SK-N-SH (cell line): ENCODE measurements at regions of chr7 and their contacts with region 1.

Region 1: GRCh38 chr7:143240291-143241168 is 18.7 kb downstream of the TAS2R40 start:
- DNase-seq: peak; percentile 68
- H3K4me3 ChIP-seq: peak overlapping the region; percentile 13 to 18; a peak in 2 of 4 replicates
- H3K27ac ChIP-seq: peak overlapping the region in 1 of 2 experiments; percentile 42; a peak in 2 of 4 replicates
- H3K4me1 ChIP-seq: peaks cover 0 to 7% of the 10 kb centered on the region in 2 experiments; a peak in 2 of 4 replicates
- H3K27me3 ChIP-seq: no peaks in the 10 kb centered on the region
- CTCF ChIP-seq: peak; percentile 100
- EP300 ChIP-seq: no peak
- RAD21 ChIP-seq: peak; percentile 95

Region 2: DNA sequence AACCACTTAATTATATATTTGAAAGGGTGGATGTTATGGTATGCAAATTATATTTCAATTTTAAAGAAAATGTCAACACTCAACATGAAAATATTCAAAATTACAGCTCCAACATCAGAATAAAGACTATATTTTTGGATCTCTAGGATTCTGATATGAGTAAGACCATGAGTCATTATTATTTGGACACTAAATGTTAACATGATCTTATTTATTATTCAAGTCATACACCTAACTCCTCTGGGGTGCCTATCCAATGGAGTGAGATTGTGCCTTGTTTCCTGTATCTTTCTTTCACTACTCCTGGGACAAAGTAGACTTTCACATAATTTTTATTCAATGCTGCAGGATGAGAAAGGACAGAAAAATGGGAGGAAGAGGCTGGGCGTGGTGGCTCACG is 626.4 kb before region 1 on chr7:
- CTCF ChIA-PET with region 1: no interaction called
- POLR2A ChIA-PET with region 1: no interaction called
- DNase-seq: no peak
- H3K4me3 ChIP-seq: no peak overlapping the region
- H3K27ac ChIP-seq: no peak overlapping the region
- H3K4me1 ChIP-seq: peaks cover 0 to 17% of the 10 kb centered on the region in 2 experiments; a peak in 2 of 4 replicates
- H3K27me3 ChIP-seq: no peaks in the 10 kb centered on the region; the same call in 1 of the 2 replicates
- CTCF ChIP-seq: no peak
- EP300 ChIP-seq: no peak
- RAD21 ChIP-seq: no peak

Region 3: DNA sequence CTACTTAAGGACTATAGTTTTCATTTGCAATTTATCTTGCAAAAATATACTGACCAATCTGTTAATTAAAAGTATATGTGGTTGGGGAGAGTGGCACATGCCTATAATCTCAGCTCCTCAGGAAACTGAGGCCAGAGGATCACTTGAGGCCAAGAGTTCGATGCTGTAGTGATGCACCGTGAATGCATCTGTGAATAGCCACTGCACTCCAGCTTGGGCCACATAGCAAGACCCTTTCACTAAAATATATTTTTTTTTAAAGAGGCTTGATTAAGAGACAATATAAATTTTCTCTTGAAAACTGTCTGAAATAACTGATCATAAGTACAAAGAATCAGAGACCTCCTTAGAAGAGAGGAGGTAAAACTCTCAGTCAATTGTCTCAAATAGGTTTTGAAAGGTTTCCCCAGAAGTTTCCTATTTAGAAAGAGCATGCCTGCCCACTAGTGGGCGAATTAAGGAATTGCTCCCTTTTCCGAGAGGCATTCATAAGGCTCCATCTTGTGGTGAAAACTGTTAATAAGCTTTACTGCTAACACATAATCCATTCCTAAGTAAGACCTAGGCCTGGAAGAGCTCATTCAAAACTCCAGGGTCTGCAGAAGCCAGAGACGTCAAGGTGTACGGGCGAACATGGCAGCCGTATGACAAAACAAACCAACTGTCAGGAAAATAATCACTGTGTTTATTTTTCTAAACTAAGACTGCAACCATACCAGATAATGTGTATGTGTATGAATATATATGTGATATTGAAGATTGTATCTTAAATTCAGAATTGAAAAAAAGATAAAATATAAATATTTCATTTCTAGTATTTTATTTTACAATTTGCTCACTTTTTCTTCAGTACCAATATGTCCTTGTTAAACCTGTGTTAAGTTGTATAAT is 25.5 kb before region 1 on chr7:
- CTCF ChIA-PET with region 1: interaction called, 32 read pairs
- POLR2A ChIA-PET with region 1: no interaction called
- DNase-seq: peak; percentile 77
- H3K4me3 ChIP-seq: no peak overlapping the region; a peak in 1 of 4 replicates
- H3K27ac ChIP-seq: no peak overlapping the region
- H3K4me1 ChIP-seq: no peaks in the 10 kb centered on the region
- H3K27me3 ChIP-seq: peaks cover 7% of the 10 kb centered on the region; the same call in 1 of the 2 replicates
- CTCF ChIP-seq: peak; percentile 100
- EP300 ChIP-seq: no peak
- RAD21 ChIP-seq: peak; percentile 100

Region 4: GRCh38 chr7:143256325-143256724 is 15.8 kb after region 1 on chr7:
- CTCF ChIA-PET with region 1: interaction called, 33 read pairs
- POLR2A ChIA-PET with region 1: no interaction called
- DNase-seq: no peak
- H3K4me3 ChIP-seq: no peak overlapping the region
- H3K27ac ChIP-seq: no peak overlapping the region
- H3K4me1 ChIP-seq: no peaks in the 10 kb centered on the region
- H3K27me3 ChIP-seq: no peaks in the 10 kb centered on the region
- CTCF ChIP-seq: peak; percentile 21; the same call in 1 of the 2 replicates
- EP300 ChIP-seq: no peak
- RAD21 ChIP-seq: no peak

Region 5: GRCh38 chr7:143287935-143288826 is 47.7 kb after region 1 on chr7 and contains the start of gene CASP2:
- CTCF ChIA-PET with region 1: interaction called, 13 read pairs
- POLR2A ChIA-PET with region 1: no interaction called
- DNase-seq: peak; percentile 100
- H3K4me3 ChIP-seq: peak within 1 kb of the TSS; percentile 73 to 86
- H3K27ac ChIP-seq: peak within 1 kb of the TSS; percentile 69 to 89
- H3K4me1 ChIP-seq: peaks cover 15 to 26% of the 10 kb centered on the region in 2 experiments; a peak in 3 of 4 replicates
- H3K27me3 ChIP-seq: no peaks in the 10 kb centered on the region
- CTCF ChIP-seq: peak; percentile 47
- EP300 ChIP-seq: no peak
- RAD21 ChIP-seq: no peak
- polyA plus RNA-seq, gene CASP2: 19.7 and 22.3 TPM in 2 replicates

Region 6: DNA sequence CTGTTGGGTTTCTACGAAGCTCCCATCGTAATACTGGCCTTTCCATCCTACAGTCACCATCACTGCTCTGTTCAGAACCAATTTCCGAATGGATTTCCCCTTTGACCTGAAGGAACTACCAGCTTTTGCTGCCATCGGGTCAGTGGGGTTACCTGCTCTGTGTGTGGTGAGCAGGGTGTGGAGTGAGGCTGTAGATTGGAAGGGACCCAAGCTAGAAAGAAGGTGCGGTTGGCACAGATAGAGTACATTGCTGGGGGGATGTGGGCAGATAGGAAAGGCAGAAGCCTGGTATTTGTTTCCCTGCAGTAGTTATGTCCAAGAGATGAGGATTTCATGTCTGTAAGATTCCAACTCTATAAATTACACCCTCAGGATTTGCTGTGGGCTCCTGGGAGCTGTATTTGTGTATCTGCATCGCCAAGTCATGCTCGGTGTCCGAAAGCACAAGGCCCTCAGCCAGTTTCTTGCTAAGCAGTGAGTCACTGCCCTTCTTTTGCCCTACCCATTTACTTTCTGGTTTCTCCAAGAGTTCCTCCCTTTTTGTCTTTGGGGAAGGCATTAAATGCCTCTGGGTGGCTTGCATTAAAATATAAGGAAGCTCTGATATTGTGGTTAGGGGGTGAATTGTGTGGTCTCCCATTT is 90.8 kb after region 1 on chr7:
- CTCF ChIA-PET with region 1: interaction called, 13 read pairs
- POLR2A ChIA-PET with region 1: interaction called, 5 read pairs
- DNase-seq: no peak
- H3K4me3 ChIP-seq: no peak overlapping the region
- H3K27ac ChIP-seq: peak overlapping the region in 1 of 2 experiments; percentile 34; a peak in 1 of 4 replicates
- H3K4me1 ChIP-seq: peaks cover 0 to 3% of the 10 kb centered on the region in 2 experiments; a peak in 1 of 4 replicates
- H3K27me3 ChIP-seq: no peaks in the 10 kb centered on the region
- CTCF ChIP-seq: no peak
- EP300 ChIP-seq: no peak
- RAD21 ChIP-seq: no peak

Region 7: GRCh38 chr7:143372070-143372469 is 131.5 kb after region 1 on chr7:
- CTCF ChIA-PET with region 1: interaction called, 20 read pairs
- POLR2A ChIA-PET with region 1: no interaction called
- DNase-seq: no peak
- H3K4me3 ChIP-seq: no peak overlapping the region
- H3K27ac ChIP-seq: no peak overlapping the region
- H3K4me1 ChIP-seq: peaks cover 6 to 29% of the 10 kb centered on the region in 2 experiments; a peak in 3 of 4 replicates
- H3K27me3 ChIP-seq: no peaks in the 10 kb centered on the region
- CTCF ChIP-seq: peak; percentile 39
- EP300 ChIP-seq: no peak
- RAD21 ChIP-seq: peak; percentile 21; the same call in 1 of the 2 replicates

Region 8: GRCh38 chr7:143416565-143417149 is 176.1 kb after region 1 on chr7:
- CTCF ChIA-PET with region 1: interaction called, 125 read pairs
- POLR2A ChIA-PET with region 1: no interaction called
- DNase-seq: peak; percentile 82
- H3K4me3 ChIP-seq: no peak overlapping the region
- H3K27ac ChIP-seq: peak overlapping the region in 1 of 2 experiments; percentile 76; a peak in 2 of 4 replicates
- H3K4me1 ChIP-seq: peaks cover 0 to 12% of the 10 kb centered on the region in 2 experiments; a peak in 2 of 4 replicates
- H3K27me3 ChIP-seq: no peaks in the 10 kb centered on the region
- CTCF ChIP-seq: peak; percentile 98
- EP300 ChIP-seq: no peak
- RAD21 ChIP-seq: peak; percentile 90